CD4-positive, alpha-beta T cell (primary cell): ENCODE measurements at regions of chr12 and their contacts with region 1.

Region 1: GRCh38 chr12:89709157-89709994 is 738 bp upstream of the ATP2B1 start:
- DNase-seq: peak; percentile 97 to 100 (median 99)
- ATAC-seq: peak; percentile 77
- H3K4me3 ChIP-seq: peak overlapping the region; percentile 99
- H3K4me3 Mint-ChIP-seq: peak overlapping the region; percentile 98
- H3K27ac ChIP-seq: peak overlapping the region; percentile 88 to 97
- H3K27ac Mint-ChIP-seq: peak overlapping the region; percentile 97
- H3K4me1 ChIP-seq: peaks cover 25% of the 10 kb centered on the region
- H3K4me1 Mint-ChIP-seq: peaks cover 43% of the 10 kb centered on the region
- H3K27me3 ChIP-seq: no peaks in the 10 kb centered on the region
- H3K27me3 Mint-ChIP-seq: no peaks in the 10 kb centered on the region
- CTCF ChIP-seq: no peak

Region 2: DNA sequence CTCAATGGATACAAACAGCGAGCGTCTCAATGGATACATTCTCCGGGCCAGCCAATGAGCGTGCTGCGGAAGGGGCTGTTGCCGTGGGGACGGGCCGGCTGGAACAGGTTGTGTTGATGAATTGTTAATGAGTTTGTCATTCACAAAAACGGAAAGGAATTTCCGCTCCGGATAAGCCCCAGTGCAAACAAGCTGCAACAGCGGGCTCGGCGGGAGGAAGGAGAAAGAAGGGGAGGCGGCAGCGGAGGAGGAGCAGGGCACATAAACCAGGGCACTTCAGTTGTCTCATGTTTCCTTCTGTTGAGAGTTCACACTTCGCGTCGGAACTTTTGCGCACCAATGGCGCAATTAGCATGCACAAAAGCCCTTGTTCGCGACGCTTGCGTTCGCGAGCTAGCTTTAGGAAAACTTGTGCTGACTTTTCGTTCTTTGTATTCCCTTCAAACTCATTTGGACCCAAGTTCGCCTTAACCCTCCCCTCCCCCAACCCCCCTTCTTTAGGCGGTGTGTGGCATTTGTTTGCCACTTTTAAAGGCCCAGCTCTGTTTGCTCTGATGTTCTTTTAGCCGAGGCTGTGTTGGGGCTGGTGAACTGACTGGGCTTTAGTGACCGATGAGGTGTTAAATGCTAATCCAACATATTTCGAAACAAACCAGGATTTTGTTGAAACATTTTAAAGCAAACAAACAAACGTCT is 356.7 kb before region 1 on chr12 and contains the start of gene DUSP6:
- CTCF ChIA-PET with region 1: no interaction called
- POLR2A ChIA-PET with region 1: interaction called, 11 read pairs
- intact Hi-C with region 1: no loop called
- DNase-seq: peak; percentile 64 to 93 (median 75)
- ATAC-seq: peak; percentile 76
- H3K4me3 ChIP-seq: peak within 1 kb of the TSS; percentile 78
- H3K4me3 Mint-ChIP-seq: peak within 1 kb of the TSS; percentile 94
- H3K27ac ChIP-seq: peak within 1 kb of the TSS in 1 of 2 donors; percentile 65
- H3K27ac Mint-ChIP-seq: peak within 1 kb of the TSS; percentile 88
- H3K4me1 ChIP-seq: peaks cover 51% of the 10 kb centered on the region
- H3K4me1 Mint-ChIP-seq: peaks cover 45% of the 10 kb centered on the region
- H3K27me3 ChIP-seq: no peaks in the 10 kb centered on the region
- H3K27me3 Mint-ChIP-seq: no peaks in the 10 kb centered on the region
- CTCF ChIP-seq: no peak
- total RNA-seq, gene DUSP6: 11.8 to 14.7 TPM

Region 3: DNA sequence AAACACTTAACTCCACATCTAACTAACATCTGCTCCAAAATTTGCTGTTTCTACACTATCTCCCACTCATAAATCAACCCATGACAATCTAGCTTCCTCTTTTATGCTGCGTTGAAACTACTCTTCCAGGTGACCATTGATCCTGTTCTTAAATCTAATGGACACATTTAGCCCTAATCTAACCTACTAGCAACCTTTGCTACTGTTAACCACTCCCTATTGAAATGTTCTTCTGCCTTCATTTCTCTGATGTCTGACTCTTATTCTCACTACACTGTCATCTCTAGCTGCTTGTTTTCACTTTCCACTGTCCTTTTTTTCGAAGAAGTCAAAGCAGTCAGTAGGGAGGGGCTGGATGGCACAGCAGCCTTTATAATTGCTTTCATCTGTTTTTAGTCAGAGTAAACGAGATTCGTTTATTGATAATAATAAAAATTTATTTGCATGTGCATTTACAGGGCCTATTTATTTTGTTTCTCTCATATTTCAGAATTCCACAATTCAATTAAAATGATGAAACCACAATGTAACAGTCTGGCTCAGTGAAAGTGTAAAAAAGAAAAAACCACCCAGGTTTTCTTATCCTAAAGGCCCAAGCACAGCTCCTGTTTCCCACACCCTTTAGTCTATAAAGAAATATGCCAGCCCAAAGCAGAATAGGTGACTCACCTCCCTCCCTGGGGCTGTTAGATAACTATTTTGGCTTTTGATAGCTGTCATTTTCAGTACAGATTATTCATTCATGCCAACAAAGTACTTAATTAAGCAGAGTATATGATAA is 45.6 kb before region 1 on chr12:
- CTCF ChIA-PET with region 1: no interaction called
- POLR2A ChIA-PET with region 1: interaction called, 22 read pairs
- intact Hi-C with region 1: loop called in 1 of 2 experiments (anchors 5 kb)
- DNase-seq: peak in 4 of 14 experiments; percentile 14 to 39 (median 25)
- ATAC-seq: peak; percentile 60
- H3K4me3 ChIP-seq: no peak overlapping the region
- H3K4me3 Mint-ChIP-seq: peak overlapping the region; percentile 21
- H3K27ac ChIP-seq: no peak overlapping the region
- H3K27ac Mint-ChIP-seq: peak overlapping the region; percentile 8
- H3K4me1 ChIP-seq: peaks cover 9% of the 10 kb centered on the region
- H3K4me1 Mint-ChIP-seq: peaks cover 79% of the 10 kb centered on the region
- H3K27me3 ChIP-seq: no peaks in the 10 kb centered on the region
- H3K27me3 Mint-ChIP-seq: no peaks in the 10 kb centered on the region
- CTCF ChIP-seq: no peak

Region 4: DNA sequence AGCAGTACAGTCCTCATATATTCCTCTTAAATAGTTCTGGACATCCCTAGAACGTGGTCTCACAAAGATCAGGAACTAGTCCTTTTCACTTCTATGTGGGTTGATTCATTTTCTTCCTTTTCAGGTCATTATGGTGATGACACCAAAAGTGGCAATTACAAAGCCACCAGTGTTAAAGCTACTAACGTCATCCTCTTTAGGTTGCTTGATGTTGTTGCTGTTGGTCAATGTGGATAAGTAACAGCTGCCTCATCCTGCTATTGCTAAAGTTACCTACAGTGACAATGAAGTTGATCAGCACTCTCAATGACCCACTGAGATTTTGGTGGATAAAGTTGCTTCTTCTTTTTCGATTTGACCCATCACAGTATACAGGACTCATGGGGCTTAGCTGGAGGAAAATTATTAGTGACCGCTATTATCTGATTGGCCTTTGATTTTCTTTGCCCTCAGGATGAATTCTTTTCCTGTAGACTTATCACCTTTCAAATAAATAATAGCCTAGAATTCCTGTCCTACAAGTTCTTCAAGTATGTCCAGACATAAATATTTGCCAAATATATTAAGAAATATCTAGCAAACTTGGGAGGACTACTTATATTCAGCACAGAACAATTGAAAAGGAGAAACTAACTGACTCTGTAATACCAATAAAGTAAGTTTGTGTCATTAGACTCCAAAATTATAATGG is 53.3 kb after region 1 on chr12:
- CTCF ChIA-PET with region 1: interaction called, 3 read pairs
- POLR2A ChIA-PET with region 1: interaction called, 23 read pairs
- intact Hi-C with region 1: no loop called
- DNase-seq: peak in 3 of 14 experiments; percentile 25 to 58 (median 29)
- ATAC-seq: no peak
- H3K4me3 ChIP-seq: no peak overlapping the region
- H3K4me3 Mint-ChIP-seq: no peak overlapping the region
- H3K27ac ChIP-seq: no peak overlapping the region
- H3K27ac Mint-ChIP-seq: no peak overlapping the region
- H3K4me1 ChIP-seq: peaks cover 15% of the 10 kb centered on the region
- H3K4me1 Mint-ChIP-seq: peaks cover 67% of the 10 kb centered on the region
- H3K27me3 ChIP-seq: no peaks in the 10 kb centered on the region
- H3K27me3 Mint-ChIP-seq: no peaks in the 10 kb centered on the region
- CTCF ChIP-seq: no peak

Region 5: GRCh38 chr12:89791294-89791693 is 81.9 kb after region 1 on chr12:
- CTCF ChIA-PET with region 1: no interaction called
- POLR2A ChIA-PET with region 1: no interaction called
- intact Hi-C with region 1: no loop called
- DNase-seq: no peak
- ATAC-seq: no peak
- H3K4me3 ChIP-seq: no peak overlapping the region
- H3K4me3 Mint-ChIP-seq: no peak overlapping the region
- H3K27ac ChIP-seq: no peak overlapping the region
- H3K27ac Mint-ChIP-seq: no peak overlapping the region
- H3K4me1 ChIP-seq: no peaks in the 10 kb centered on the region
- H3K4me1 Mint-ChIP-seq: no peaks in the 10 kb centered on the region
- H3K27me3 ChIP-seq: no peaks in the 10 kb centered on the region
- H3K27me3 Mint-ChIP-seq: no peaks in the 10 kb centered on the region
- CTCF ChIP-seq: no peak

Region 6: DNA sequence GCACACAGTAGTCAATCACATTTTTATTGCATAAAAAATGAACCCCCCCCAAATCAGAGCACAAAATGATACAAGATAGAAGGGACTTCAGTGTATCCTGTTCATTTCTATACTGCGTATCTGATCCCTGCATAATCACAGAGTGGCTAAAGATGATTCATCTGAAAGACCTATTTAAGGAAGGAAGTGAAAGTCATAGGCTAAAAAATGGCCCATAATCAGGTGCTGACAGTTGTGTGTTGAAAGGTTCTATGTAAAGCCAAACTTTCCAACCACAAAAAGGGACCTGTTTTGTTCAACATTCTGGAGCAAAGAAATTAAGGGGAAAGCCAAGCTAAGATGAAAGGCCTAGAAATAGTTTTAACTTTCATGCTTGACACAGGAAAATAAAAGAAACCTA is 147.1 kb after region 1 on chr12:
- CTCF ChIA-PET with region 1: interaction called, 4 read pairs
- POLR2A ChIA-PET with region 1: interaction called, 9 read pairs
- intact Hi-C with region 1: loop called in 1 of 2 experiments (anchors 5 kb)
- DNase-seq: peak in 3 of 14 experiments; percentile 32 to 64 (median 58)
- ATAC-seq: peak; percentile 61
- H3K4me3 ChIP-seq: no peak overlapping the region
- H3K4me3 Mint-ChIP-seq: no peak overlapping the region
- H3K27ac ChIP-seq: no peak overlapping the region
- H3K27ac Mint-ChIP-seq: peak overlapping the region; percentile 29
- H3K4me1 ChIP-seq: peaks cover 20% of the 10 kb centered on the region
- H3K4me1 Mint-ChIP-seq: peaks cover 48% of the 10 kb centered on the region
- H3K27me3 ChIP-seq: no peaks in the 10 kb centered on the region
- H3K27me3 Mint-ChIP-seq: no peaks in the 10 kb centered on the region
- CTCF ChIP-seq: no peak

Region 7: GRCh38 chr12:89882050-89882449 is 172.7 kb after region 1 on chr12:
- CTCF ChIA-PET with region 1: no interaction called
- POLR2A ChIA-PET with region 1: interaction called, 17 read pairs
- intact Hi-C with region 1: loop called in 1 of 2 experiments (anchors 5 kb)
- DNase-seq: peak in 4 of 14 experiments; percentile 29 to 52 (median 44)
- ATAC-seq: no peak
- H3K4me3 ChIP-seq: no peak overlapping the region
- H3K4me3 Mint-ChIP-seq: peak overlapping the region; percentile 60
- H3K27ac ChIP-seq: peak overlapping the region; percentile 13 to 73
- H3K27ac Mint-ChIP-seq: peak overlapping the region; percentile 95
- H3K4me1 ChIP-seq: peaks cover 17% of the 10 kb centered on the region
- H3K4me1 Mint-ChIP-seq: peaks cover 64% of the 10 kb centered on the region
- H3K27me3 ChIP-seq: no peaks in the 10 kb centered on the region
- H3K27me3 Mint-ChIP-seq: no peaks in the 10 kb centered on the region
- CTCF ChIP-seq: no peak

Region 8: DNA sequence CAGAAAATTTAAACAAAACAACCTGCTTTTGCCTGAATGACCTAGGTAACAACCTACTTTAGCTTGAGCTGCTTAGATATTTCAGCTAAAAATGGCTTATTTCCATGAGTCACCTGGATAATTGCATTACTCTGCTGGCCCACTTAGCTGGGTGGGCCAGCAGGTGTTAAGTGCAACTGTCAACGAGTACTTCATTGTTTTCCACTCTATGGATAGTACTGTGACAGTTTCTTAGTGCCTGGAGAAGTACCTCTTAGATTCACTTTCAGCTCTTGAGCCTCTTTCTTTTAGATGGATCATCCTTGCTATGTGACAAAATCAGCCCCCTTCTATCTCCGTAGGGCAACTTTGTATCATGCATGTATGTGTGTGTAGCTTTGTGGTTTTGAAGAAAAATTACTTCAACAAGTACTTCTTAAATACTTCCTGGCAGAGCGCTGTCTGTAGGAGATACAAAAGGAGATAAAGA is 367.5 kb after region 1 on chr12:
- CTCF ChIA-PET with region 1: no interaction called
- POLR2A ChIA-PET with region 1: interaction called, 12 read pairs
- intact Hi-C with region 1: no loop called
- DNase-seq: peak in 3 of 14 experiments; percentile 14 to 16 (median 16)
- ATAC-seq: peak; percentile 68
- H3K4me3 ChIP-seq: no peak overlapping the region
- H3K4me3 Mint-ChIP-seq: peak overlapping the region; percentile 34
- H3K27ac ChIP-seq: no peak overlapping the region
- H3K27ac Mint-ChIP-seq: peak overlapping the region; percentile 63
- H3K4me1 ChIP-seq: peaks cover 17% of the 10 kb centered on the region
- H3K4me1 Mint-ChIP-seq: peaks cover 50% of the 10 kb centered on the region
- H3K27me3 ChIP-seq: no peaks in the 10 kb centered on the region
- H3K27me3 Mint-ChIP-seq: no peaks in the 10 kb centered on the region
- CTCF ChIP-seq: no peak